ENCODE measurements at regions of chr13 and their contacts with region 1.

Region 1: GRCh38 chr13:91767651-91768050 is 369.2 kb downstream of the GPC5 start:
- DNase-seq: no peak
- H3K4me3 ChIP-seq: no peak overlapping the region
- H3K27ac ChIP-seq: no peak overlapping the region
- H3K4me1 ChIP-seq: no peaks in the 10 kb centered on the region
- CTCF ChIP-seq: no peak

Region 2: GRCh38 chr13:91785431-91786119 is 17.9 kb after region 1 on chr13:
- CTCF ChIA-PET with region 1: no interaction called
- POLR2A ChIA-PET with region 1: interaction called, 10 read pairs
- intact Hi-C with region 1: no loop called
- DNase-seq: no peak
- H3K4me3 ChIP-seq: no peak overlapping the region
- H3K27ac ChIP-seq: no peak overlapping the region
- H3K4me1 ChIP-seq: no peaks in the 10 kb centered on the region
- CTCF ChIP-seq: no peak

Measured in OCI-LY7 (cell line).